ENCODE measurements at regions of chr12 and their contacts with region 1.

Region 1: DNA sequence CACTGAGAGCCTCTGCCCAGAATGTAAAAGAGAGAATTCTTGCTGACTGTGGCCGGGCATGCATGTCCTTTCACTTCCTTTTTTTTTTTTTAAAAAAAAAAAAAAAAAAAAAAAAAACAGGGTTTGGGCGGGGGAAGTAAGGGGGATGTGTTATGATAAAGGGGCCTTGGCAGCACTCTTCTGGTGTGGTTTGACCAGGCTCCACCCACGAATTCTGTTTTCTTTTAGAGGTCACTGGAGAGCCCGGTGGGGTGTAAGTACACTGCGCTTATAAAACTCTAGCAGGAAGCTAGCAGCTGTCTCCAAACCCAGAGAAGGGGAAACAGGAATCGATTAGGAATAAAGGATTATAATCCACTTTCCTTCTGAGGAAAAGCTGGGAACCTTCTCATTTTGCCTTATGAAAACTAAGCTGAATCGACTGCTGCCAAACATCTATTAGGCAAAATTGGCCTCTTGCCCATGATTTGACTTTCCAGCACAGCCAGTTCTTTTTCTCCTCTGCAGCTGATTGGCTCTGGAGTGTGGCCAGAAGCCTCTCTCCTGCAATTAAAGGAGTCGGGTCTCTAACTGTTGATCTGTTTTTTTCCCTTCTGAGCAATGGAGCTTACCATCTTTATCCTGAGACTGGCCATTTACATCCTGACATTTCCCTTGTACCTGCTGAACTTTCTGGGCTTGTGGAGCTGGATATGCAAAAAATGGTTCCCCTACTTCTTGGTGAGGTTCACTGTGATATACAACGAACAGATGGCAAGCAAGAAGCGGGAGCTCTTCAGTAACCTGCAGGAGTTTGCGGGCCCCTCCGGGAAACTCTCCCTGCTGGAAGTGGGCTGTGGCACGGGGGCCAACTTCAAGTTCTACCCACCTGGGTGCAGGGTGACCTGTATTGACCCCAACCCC is 27.7 kb upstream of the HIGD1C start:
- DNase-seq: peak; percentile 83
- H3K4me3 ChIP-seq: peak overlapping the region; percentile 66 to 92 (median 82)
- H3K27ac ChIP-seq: peak overlapping the region; percentile 73 to 95 (median 90)
- H3K4me1 ChIP-seq: peaks cover 32 to 87% (median 54%) of the 10 kb centered on the region in 6 donors
- H3K27me3 ChIP-seq: no peaks in the 10 kb centered on the region
- CTCF ChIP-seq: peak in 1 of 11 experiments; percentile 5
- POLR2A ChIP-seq: peak in 1 of 3 donors; percentile 48

Region 2: GRCh38 chr12:50763639-50764285 is 160.9 kb before region 1 on chr12 and contains the start of gene ATF1:
- intact Hi-C with region 1: loop called (anchors 10 kb)
- DNase-seq: peak; percentile 98
- H3K4me3 ChIP-seq: peak within 1 kb of the TSS; percentile 97 to 100 (median 100)
- H3K27ac ChIP-seq: peak within 1 kb of the TSS; percentile 95 to 100 (median 98)
- H3K4me1 ChIP-seq: peaks cover 17 to 74% (median 34%) of the 10 kb centered on the region in 6 donors
- H3K27me3 ChIP-seq: no peaks in the 10 kb centered on the region
- CTCF ChIP-seq: no peak
- POLR2A ChIP-seq: no peak
- total RNA-seq, gene ATF1: 17.4 to 41.7 (median 30.7) TPM

Region 3: GRCh38 chr12:50986966-50987737 is 62.5 kb after region 1 on chr12:
- intact Hi-C with region 1: loop called (anchors 10 kb)
- DNase-seq: no peak
- H3K4me3 ChIP-seq: no peak overlapping the region
- H3K27ac ChIP-seq: no peak overlapping the region
- H3K4me1 ChIP-seq: peaks cover 0 to 24% (median 6%) of the 10 kb centered on the region in 6 donors
- H3K27me3 ChIP-seq: no peaks in the 10 kb centered on the region
- CTCF ChIP-seq: peak in 8 of 11 experiments; percentile 34 to 62 (median 51)
- POLR2A ChIP-seq: no peak

Measured in spleen (tissue), 13 donors.